Activated CD4-positive, alpha-beta memory T cell treated with anti-CD3 and anti-CD28 coated beads, Interleukin-2, amount 10 ng/mL, durations not matched to agents 7 days and 5 days (primary cell): ENCODE measurements at regions of chr4 and their contacts with region 1.

Region 1: GRCh38 chr4:57163530-57164459 is 53.6 kb upstream of the IGFBP7 start:
- DNase-seq: peak; percentile 74
- H3K4me3 Mint-ChIP-seq: peak overlapping the region; percentile 76
- H3K27ac Mint-ChIP-seq: no peak overlapping the region
- H3K4me1 Mint-ChIP-seq: peaks cover 12% of the 10 kb centered on the region
- H3K27me3 Mint-ChIP-seq: peaks cover 25% of the 10 kb centered on the region

Region 2: GRCh38 chr4:57037982-57038604 is 125.7 kb before region 1 on chr4:
- CTCF ChIA-PET with region 1: interaction called, 11 read pairs
- POLR2A ChIA-PET with region 1: no interaction called
- DNase-seq: no peak
- H3K4me3 Mint-ChIP-seq: no peak overlapping the region
- H3K27ac Mint-ChIP-seq: no peak overlapping the region
- H3K4me1 Mint-ChIP-seq: no peaks in the 10 kb centered on the region
- H3K27me3 Mint-ChIP-seq: peaks cover 7% of the 10 kb centered on the region

Region 3: GRCh38 chr4:57080781-57081650 is 82.8 kb before region 1 on chr4:
- CTCF ChIA-PET with region 1: no interaction called
- POLR2A ChIA-PET with region 1: no interaction called
- DNase-seq: no peak
- H3K4me3 Mint-ChIP-seq: no peak overlapping the region
- H3K27ac Mint-ChIP-seq: no peak overlapping the region
- H3K4me1 Mint-ChIP-seq: no peaks in the 10 kb centered on the region
- H3K27me3 Mint-ChIP-seq: peaks cover 12% of the 10 kb centered on the region

Region 4: DNA sequence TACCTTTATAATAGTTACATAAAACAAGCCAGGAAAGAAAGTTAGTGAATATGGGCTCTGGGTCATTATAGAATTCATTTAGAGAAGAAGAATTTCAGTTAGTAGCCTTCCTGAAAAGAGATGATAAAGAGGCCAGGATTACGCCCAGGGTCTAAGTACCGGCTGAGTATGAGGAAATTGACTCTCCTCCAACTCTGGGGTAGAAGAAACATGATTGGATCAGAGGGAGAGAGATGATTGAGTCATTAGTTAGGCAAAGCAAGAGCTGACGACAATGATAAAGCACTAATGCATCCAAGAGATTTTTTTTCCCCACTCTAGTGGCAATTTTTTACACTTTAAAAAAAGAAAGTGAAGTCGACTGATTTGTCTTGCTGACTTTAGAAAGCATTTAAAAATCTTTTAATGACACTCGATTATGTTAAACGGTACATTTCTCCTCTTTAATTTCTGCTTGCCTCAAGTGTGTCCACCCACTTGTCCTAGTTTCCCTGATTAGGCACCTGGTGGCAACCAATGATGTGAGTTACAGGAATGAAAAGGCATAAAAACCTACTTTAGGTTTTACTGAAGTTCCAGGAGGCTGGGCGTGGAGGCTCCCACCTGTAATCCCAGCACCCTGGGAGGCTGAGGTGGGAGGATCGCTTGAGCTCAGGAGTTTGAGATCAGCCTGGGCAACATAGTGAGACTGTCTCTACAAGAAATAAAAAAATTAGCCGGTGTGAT is 16.3 kb before region 1 on chr4:
- CTCF ChIA-PET with region 1: interaction called, 16 read pairs
- POLR2A ChIA-PET with region 1: interaction called, 3 read pairs
- DNase-seq: no peak
- H3K4me3 Mint-ChIP-seq: no peak overlapping the region
- H3K27ac Mint-ChIP-seq: no peak overlapping the region
- H3K4me1 Mint-ChIP-seq: no peaks in the 10 kb centered on the region
- H3K27me3 Mint-ChIP-seq: peaks cover 9% of the 10 kb centered on the region

Region 5: DNA sequence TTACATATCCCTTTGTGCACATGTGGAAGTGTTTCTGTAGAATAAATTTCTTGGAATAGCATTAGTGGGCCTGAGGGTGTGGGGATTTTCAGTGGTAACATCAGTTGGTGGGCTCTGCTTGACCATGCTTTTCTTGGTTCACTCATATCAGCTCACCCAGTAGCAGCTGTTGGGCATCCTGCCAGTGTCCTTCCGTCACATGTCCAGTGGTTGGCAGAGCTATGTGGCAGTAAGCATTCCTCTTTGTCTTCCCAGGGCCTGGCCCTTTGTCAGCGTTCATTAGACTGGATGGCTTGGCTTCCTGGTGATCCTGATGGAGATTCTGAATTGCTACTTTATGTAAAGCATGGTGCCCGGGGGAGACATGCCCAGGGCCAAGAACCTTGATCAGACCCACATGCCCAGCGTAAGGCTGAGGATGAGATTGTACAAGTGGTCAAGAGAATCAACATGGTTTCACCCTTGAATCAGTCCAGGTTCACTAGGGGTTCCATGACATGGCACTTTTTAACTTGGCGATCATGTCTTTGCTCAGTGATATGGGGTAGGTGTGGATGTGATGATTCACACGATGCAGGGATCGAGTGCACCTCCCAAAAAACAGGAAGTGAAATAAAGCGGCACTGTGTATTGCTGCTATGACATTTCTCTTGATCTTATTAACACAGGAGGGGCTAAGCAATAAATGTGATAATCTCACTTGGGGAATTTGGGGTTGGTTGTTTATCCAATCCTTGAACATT is 18.5 kb after region 1 on chr4:
- CTCF ChIA-PET with region 1: interaction called, 10 read pairs
- POLR2A ChIA-PET with region 1: no interaction called
- DNase-seq: no peak
- H3K4me3 Mint-ChIP-seq: no peak overlapping the region
- H3K27ac Mint-ChIP-seq: no peak overlapping the region
- H3K4me1 Mint-ChIP-seq: no peaks in the 10 kb centered on the region
- H3K27me3 Mint-ChIP-seq: peaks cover 2% of the 10 kb centered on the region

Region 6: DNA sequence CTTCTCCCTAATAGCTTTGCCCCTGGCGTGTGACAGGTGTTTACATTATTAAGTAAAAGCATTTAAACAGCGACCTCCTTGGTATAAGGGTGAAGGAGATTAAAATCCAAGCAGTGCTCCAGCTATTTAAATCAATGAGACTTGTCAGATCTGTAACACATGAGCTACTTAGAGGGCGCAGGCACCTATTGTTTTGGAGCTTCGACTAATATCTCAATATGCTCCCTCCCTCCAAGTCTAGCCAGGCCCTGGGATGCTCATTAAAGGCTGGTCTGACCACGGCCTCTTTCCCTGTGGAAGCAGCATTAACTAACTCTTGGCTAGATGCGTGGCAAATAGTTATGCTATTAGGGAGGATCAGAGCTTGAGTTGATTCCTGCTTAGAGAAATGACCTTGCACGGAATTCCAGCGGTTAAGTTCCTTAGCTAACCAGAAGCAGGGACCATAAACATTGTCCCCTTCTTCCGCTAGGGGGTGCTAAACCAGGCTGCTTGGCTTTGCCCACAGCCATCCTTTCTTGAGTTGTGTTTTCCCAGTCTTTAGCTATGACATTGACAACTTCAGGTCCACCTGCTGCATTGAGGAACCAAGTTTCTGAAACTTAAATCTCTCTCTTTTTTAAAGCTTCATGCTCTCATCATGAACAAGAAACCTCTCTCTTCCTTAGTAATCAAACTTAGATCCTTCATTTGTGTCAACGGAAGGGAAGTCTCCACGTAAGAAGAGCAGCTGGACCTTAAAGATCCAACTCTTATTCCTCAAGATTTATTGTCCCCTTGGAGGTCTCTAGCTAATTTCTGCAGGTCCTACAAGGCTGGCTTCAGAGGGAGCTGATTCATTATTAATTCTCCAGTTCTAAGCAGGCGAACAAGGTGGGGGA is 27.0 kb after region 1 on chr4:
- CTCF ChIA-PET with region 1: interaction called, 21 read pairs
- POLR2A ChIA-PET with region 1: no interaction called
- DNase-seq: peak; percentile 16
- H3K4me3 Mint-ChIP-seq: no peak overlapping the region
- H3K27ac Mint-ChIP-seq: no peak overlapping the region
- H3K4me1 Mint-ChIP-seq: no peaks in the 10 kb centered on the region
- H3K27me3 Mint-ChIP-seq: peaks cover 3% of the 10 kb centered on the region